ENCODE measurements at regions of chr6 and their contacts with region 1.

Region 1: DNA sequence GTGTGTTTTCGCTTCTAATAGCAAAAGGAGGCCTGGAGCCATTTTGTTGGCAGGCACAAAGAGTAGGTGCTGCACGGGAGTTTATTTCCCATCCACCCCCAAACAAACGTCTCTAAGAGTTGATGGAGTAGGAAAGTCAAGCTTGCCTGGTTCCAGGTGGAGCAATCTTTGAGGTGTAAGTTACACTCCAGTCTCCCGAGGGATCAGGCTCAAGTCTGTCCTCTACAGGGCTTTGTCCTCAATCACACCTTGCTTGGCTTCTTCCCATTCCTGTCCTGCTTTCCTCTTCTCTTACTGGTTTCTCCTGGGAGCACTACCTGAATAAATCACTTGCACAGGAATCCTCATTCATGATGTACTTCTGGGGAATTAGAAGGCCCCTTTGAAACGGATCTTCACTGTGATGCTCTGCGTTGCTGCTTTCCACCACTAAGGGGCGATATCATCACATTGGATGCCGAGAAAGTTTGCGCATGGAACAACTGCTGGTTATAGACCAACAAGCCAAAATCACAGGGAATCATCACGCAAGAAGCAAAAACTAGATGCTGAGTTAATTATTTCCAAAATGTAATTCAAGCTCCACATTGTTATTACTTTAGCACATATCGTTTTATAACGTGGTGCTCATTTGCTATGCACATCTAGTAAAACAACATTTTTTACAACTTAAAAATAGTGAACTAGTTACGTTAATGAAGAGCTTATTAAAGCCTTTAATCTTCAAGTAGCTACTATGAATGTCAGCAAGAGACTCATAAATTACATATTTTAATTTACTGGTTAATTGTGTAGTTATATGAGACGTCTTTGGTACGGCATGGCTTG is 156.8 kb downstream of the DNAH8 start:
- DNase-seq: peak; percentile 7 to 71 (median 46)
- ATAC-seq: peak; percentile 65
- H3K4me3 ChIP-seq: no peak overlapping the region
- H3K4me3 Mint-ChIP-seq: no peak overlapping the region
- H3K27ac ChIP-seq: no peak overlapping the region
- H3K27ac Mint-ChIP-seq: no peak overlapping the region
- H3K4me1 ChIP-seq: peaks cover 23% of the 10 kb centered on the region
- H3K4me1 Mint-ChIP-seq: peaks cover 26% of the 10 kb centered on the region
- H3K27me3 ChIP-seq: no peaks in the 10 kb centered on the region
- H3K27me3 Mint-ChIP-seq: peaks cover 5% of the 10 kb centered on the region
- CTCF ChIP-seq: peak; percentile 91

Region 2: GRCh38 chr6:38924791-38925509 is 53.0 kb after region 1 on chr6:
- CTCF ChIA-PET with region 1: interaction called, 14 read pairs
- POLR2A ChIA-PET with region 1: no interaction called
- intact Hi-C with region 1: loop called in 1 of 2 experiments (anchors 2 kb)
- DNase-seq: no peak
- ATAC-seq: no peak
- H3K4me3 ChIP-seq: no peak overlapping the region
- H3K4me3 Mint-ChIP-seq: no peak overlapping the region
- H3K27ac ChIP-seq: no peak overlapping the region
- H3K27ac Mint-ChIP-seq: no peak overlapping the region
- H3K4me1 ChIP-seq: no peaks in the 10 kb centered on the region
- H3K4me1 Mint-ChIP-seq: no peaks in the 10 kb centered on the region
- H3K27me3 ChIP-seq: no peaks in the 10 kb centered on the region
- H3K27me3 Mint-ChIP-seq: peaks cover 12% of the 10 kb centered on the region
- CTCF ChIP-seq: no peak

Region 3: GRCh38 chr6:38997128-38997761 is 125.3 kb after region 1 on chr6:
- CTCF ChIA-PET with region 1: interaction called, 11 read pairs
- POLR2A ChIA-PET with region 1: no interaction called
- intact Hi-C with region 1: no loop called
- DNase-seq: peak; percentile 6 to 50 (median 26)
- ATAC-seq: no peak
- H3K4me3 ChIP-seq: no peak overlapping the region
- H3K4me3 Mint-ChIP-seq: no peak overlapping the region
- H3K27ac ChIP-seq: no peak overlapping the region
- H3K27ac Mint-ChIP-seq: no peak overlapping the region
- H3K4me1 ChIP-seq: no peaks in the 10 kb centered on the region
- H3K4me1 Mint-ChIP-seq: no peaks in the 10 kb centered on the region
- H3K27me3 ChIP-seq: no peaks in the 10 kb centered on the region
- H3K27me3 Mint-ChIP-seq: peaks cover 44% of the 10 kb centered on the region
- CTCF ChIP-seq: peak; percentile 48

Region 4: DNA sequence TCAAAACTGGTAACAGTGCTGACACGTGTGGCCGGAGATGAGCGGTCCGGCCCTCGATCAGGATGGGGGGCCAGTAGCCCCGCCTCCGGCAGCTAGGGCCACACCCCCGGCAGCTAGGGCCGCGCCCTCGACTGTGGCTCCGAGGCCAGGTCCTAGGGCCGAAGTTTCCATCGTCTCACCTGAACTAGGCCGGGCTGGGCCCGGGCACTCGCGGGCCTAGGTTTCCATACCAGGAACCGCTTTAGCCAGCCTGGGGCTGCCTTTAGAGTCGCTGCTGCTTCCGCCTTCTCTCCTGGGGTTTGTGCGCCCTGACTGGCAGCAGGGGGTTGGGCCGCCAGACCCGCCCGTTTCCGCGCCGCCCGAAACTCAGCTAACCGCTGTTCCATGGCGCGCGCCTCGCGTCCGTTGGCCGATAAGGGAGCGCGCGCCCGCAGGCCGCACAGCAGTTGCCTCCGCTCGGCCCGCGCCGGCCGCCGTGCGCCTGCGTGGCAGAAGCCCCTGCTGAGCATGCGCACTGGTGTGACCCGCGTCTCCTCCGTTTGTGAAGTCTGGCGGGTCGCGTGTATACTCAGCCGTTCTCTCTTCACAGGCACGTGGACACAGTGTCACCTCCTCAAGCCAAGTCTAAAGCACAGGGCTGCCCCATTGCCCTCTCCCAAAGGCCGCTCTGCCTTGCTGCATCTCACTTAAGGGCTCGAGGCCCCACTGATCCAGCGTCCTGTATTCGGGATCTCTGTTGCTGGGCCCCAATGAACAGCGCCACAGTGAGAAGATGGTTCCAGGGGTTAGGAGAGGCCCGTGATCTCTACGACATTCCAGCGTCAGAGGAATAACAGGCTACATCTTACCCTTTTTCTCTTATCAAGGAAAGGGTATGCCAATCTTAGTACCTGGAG is 243.0 kb after region 1 on chr6 and contains the start of gene SAYSD1:
- CTCF ChIA-PET with region 1: interaction called, 5 read pairs
- POLR2A ChIA-PET with region 1: interaction called, 4 read pairs
- intact Hi-C with region 1: loop called in 1 of 2 experiments (anchors 10 kb)
- DNase-seq: peak; percentile 80 to 98 (median 91)
- ATAC-seq: peak; percentile 79
- H3K4me3 ChIP-seq: peak within 1 kb of the TSS; percentile 64 to 71
- H3K4me3 Mint-ChIP-seq: peak within 1 kb of the TSS; percentile 96
- H3K27ac ChIP-seq: peak within 1 kb of the TSS; percentile 80 to 88
- H3K27ac Mint-ChIP-seq: peak within 1 kb of the TSS; percentile 98
- H3K4me1 ChIP-seq: peaks cover 45% of the 10 kb centered on the region
- H3K4me1 Mint-ChIP-seq: peaks cover 57% of the 10 kb centered on the region
- H3K27me3 ChIP-seq: no peaks in the 10 kb centered on the region
- H3K27me3 Mint-ChIP-seq: no peaks in the 10 kb centered on the region
- CTCF ChIP-seq: no peak
- total RNA-seq, gene SAYSD1: 21.8 to 24.3 TPM

Region 5: GRCh38 chr6:39302669-39303424 is 430.9 kb after region 1 on chr6:
- CTCF ChIA-PET with region 1: interaction called, 111 read pairs
- POLR2A ChIA-PET with region 1: interaction called, 4 read pairs
- intact Hi-C with region 1: loop called (anchors 1 kb)
- DNase-seq: peak; percentile 76 to 90 (median 86)
- ATAC-seq: peak; percentile 99
- H3K4me3 ChIP-seq: peak overlapping the region in 1 of 2 experiments; percentile 27
- H3K4me3 Mint-ChIP-seq: peak overlapping the region; percentile 70
- H3K27ac ChIP-seq: no peak overlapping the region
- H3K27ac Mint-ChIP-seq: no peak overlapping the region
- H3K4me1 ChIP-seq: no peaks in the 10 kb centered on the region
- H3K4me1 Mint-ChIP-seq: peaks cover 6% of the 10 kb centered on the region
- H3K27me3 ChIP-seq: no peaks in the 10 kb centered on the region
- H3K27me3 Mint-ChIP-seq: no peaks in the 10 kb centered on the region
- CTCF ChIP-seq: peak; percentile 74